Posterior cingulate gyrus (tissue), 11 donors: ENCODE measurements at regions of chr14 and their contacts with region 1.

Region 1: GRCh38 chr14:28308734-28309133 is 457.9 kb upstream of the FOXG1 start:
- DNase-seq: no peak

Region 2: GRCh38 chr14:28608851-28609828 is 300.4 kb after region 1 on chr14:
- intact Hi-C with region 1: loop called (anchors 5 kb)
- DNase-seq: peak; percentile 59 to 96 (median 84)